Caco-2 (cell line): ENCODE measurements at regions of chr16 and their contacts with region 1.

Region 1: GRCh38 chr16:57244767-57245471 is at the start of gene ARL2BP:
- DNase-seq: peak; percentile 99 to 100
- H3K4me3 ChIP-seq: peak within 1 kb of the TSS; percentile 51
- H3K4me3 Mint-ChIP-seq: peak within 1 kb of the TSS; percentile 85
- H3K27ac Mint-ChIP-seq: peak within 1 kb of the TSS; percentile 87
- H3K4me1 ChIP-seq: no peaks in the 10 kb centered on the region
- H3K4me1 Mint-ChIP-seq: peaks cover 8% of the 10 kb centered on the region
- H3K27me3 ChIP-seq: no peaks in the 10 kb centered on the region
- H3K27me3 Mint-ChIP-seq: no peaks in the 10 kb centered on the region
- CTCF ChIP-seq: peak in 1 of 2 experiments; percentile 10
- total RNA-seq, gene ARL2BP: 38.5 and 47.6 TPM in 2 replicates

Region 2: DNA sequence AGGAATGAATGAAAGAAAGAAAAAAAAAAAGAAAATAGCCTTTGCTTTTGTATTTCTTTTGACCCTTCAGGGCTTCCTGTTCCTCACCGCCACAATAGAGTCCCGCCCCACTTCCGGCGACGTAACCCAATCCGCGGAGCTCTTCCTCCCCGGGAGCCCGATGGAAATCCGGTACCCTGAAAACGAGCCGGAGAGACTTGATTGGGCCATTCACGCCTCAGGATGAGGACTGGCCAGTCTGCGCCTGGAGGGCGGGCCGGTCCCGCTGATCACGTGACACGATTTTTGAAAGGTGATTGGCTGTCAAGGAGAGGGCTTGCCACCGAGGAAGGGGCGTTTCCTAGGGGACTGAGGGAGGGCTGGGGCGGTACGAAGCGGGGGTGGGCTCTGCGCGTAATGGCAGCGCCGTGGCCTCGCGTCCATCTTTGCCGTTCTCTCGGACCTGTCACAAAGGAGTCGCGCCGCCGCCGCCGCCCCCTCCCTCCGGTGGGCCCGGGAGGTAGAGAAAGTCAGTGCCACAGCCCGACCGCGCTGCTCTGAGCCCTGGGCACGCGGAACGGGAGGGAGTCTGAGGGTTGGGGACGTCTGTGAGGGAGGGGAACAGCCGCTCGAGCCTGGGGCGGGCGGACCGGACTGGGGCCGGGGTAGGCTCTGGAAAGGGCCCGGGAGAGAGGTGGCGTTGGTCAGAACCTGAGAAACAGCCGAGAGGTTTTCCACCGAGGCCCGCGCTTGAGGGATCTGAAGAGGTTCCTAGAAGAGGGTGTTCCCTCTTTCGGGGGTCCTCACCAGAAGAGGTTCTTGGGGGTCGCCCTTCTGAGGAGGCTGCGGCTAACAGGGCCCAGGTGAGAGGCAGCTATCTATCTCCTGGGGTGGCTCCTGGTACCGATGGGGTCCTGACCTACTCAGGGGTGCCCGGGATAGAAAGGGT is 58.7 kb before region 1 on chr16 and contains the starts of genes PSME3IP1 and RSPRY1:
- CTCF ChIA-PET with region 1: no interaction called
- POLR2A ChIA-PET with region 1: interaction called, 8 read pairs
- intact Hi-C with region 1: loop called (anchors 2 kb)
- DNase-seq: peak; percentile 100
- H3K4me3 ChIP-seq: peak within 1 kb of the TSS; percentile 92
- H3K4me3 Mint-ChIP-seq: peak within 1 kb of the TSS; percentile 99
- H3K27ac Mint-ChIP-seq: peak within 1 kb of the TSS; percentile 97
- H3K4me1 ChIP-seq: peaks cover 14% of the 10 kb centered on the region; the same call in 1 of the 2 replicates
- H3K4me1 Mint-ChIP-seq: peaks cover 31% of the 10 kb centered on the region
- H3K27me3 ChIP-seq: no peaks in the 10 kb centered on the region
- H3K27me3 Mint-ChIP-seq: no peaks in the 10 kb centered on the region
- CTCF ChIP-seq: no peak
- total RNA-seq, gene PSME3IP1: 141 and 143 TPM in 2 replicates
- total RNA-seq, gene RSPRY1: 56.7 and 57.7 TPM in 2 replicates

Region 3: GRCh38 chr16:57194512-57194911 is 50.4 kb before region 1 on chr16:
- CTCF ChIA-PET with region 1: no interaction called
- POLR2A ChIA-PET with region 1: interaction called, 3 read pairs
- intact Hi-C with region 1: loop called (anchors 2 kb)
- DNase-seq: peak in 1 of 2 experiments; percentile 68
- H3K4me3 ChIP-seq: no peak overlapping the region
- H3K4me3 Mint-ChIP-seq: peak overlapping the region; percentile 4
- H3K27ac Mint-ChIP-seq: peak overlapping the region; percentile 37
- H3K4me1 ChIP-seq: peaks cover 50% of the 10 kb centered on the region
- H3K4me1 Mint-ChIP-seq: peaks cover 49% of the 10 kb centered on the region
- H3K27me3 ChIP-seq: no peaks in the 10 kb centered on the region
- H3K27me3 Mint-ChIP-seq: no peaks in the 10 kb centered on the region
- CTCF ChIP-seq: no peak

Region 4: DNA sequence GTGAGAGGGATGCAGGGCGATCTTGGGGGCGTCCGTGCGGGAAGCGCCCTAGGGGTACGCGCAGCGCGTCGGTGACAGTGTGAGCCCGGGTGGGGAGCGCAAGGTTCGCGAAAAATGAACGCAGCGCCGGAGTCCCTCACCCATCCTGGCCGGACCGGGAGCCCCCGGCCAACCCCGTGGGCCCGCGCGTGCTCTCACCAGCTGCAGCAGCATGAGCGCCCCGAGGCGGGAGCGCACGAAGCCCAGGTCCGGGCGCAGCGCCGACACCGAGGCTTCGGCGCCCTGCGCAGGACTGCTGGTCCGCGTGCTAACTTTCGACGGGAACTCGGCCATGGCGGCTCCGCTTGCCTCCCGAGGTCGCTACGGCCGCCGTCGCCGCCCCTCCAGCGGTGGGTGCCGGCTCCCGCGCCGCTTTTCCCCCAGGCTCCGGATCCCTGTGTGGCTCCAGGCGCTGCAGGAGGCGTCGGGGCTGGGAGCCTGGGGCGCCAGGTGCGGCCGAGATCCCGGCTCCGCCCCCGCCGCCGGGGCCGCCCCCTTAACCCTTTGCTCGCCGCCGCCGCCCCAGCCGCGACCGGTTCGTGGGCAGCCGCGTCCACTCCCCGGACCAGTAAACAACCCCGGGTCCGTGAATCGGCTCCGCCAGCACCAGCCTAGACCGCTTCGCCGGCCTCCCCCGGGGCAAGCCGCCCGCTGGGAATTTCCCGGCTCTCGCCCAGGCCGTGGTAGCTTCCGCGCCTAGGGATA is 39.5 kb after region 1 on chr16 and contains the start of gene PLLP:
- CTCF ChIA-PET with region 1: interaction called, 5 read pairs
- POLR2A ChIA-PET with region 1: interaction called, 9 read pairs
- intact Hi-C with region 1: loop called (anchors 1 kb)
- DNase-seq: peak; percentile 77 to 89
- H3K4me3 ChIP-seq: peak within 1 kb of the TSS; percentile 99
- H3K4me3 Mint-ChIP-seq: peak within 1 kb of the TSS; percentile 80
- H3K27ac Mint-ChIP-seq: peak within 1 kb of the TSS; percentile 82
- H3K4me1 ChIP-seq: peaks cover 28% of the 10 kb centered on the region
- H3K4me1 Mint-ChIP-seq: peaks cover 31% of the 10 kb centered on the region
- H3K27me3 ChIP-seq: no peaks in the 10 kb centered on the region
- H3K27me3 Mint-ChIP-seq: no peaks in the 10 kb centered on the region
- CTCF ChIP-seq: no peak
- total RNA-seq, gene PLLP: 53.0 and 54.0 TPM in 2 replicates

Region 5: DNA sequence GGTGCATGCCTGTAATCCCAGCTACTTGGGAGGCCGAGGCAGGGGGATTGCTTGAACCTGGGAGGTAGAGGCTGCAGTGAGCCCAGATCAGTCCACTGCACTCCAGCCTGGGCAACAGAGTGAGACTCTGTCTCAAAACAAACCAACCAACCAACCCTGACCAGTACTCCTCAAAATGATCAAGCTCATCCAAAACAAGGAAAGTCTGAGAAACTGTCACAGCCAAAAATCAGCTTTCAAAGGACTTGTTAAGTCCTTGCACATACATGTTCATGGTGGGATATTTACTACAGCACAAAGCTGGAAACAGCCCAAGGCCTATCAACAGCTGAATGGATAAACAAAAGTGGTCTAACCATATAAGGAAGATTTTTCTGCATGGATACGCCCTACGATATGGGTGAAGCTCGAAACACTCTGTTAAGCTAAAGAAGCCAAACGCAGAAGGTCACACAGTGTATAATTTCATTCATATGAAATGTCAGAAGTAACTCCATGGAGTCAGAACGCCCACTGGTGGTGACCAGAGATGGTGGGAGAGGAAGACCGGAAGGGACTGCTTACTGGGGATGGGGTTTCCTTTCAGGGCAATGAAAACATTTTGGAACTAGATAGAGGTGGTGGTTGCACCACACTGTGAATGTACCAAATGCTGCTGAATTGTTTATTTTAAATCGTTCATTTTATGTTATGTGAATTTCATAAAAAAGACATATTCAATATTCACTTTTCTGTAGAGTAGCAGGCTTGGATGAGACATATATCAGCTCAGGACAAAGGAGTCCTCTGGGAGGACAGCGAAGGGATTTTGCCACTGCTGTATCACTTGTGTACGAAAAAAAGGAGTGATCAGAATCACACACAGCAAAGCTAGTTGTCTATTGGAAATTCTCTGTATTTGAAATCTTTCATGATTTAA is 177.4 kb after region 1 on chr16:
- CTCF ChIA-PET with region 1: interaction called, 5 read pairs
- POLR2A ChIA-PET with region 1: no interaction called
- intact Hi-C with region 1: loop called (anchors 1 kb)
- DNase-seq: peak in 1 of 2 experiments; percentile 75
- H3K4me3 ChIP-seq: no peak overlapping the region
- H3K4me3 Mint-ChIP-seq: peak overlapping the region; percentile 5
- H3K27ac Mint-ChIP-seq: no peak overlapping the region
- H3K4me1 ChIP-seq: peaks cover 14% of the 10 kb centered on the region
- H3K4me1 Mint-ChIP-seq: peaks cover 32% of the 10 kb centered on the region
- H3K27me3 ChIP-seq: no peaks in the 10 kb centered on the region
- H3K27me3 Mint-ChIP-seq: no peaks in the 10 kb centered on the region
- CTCF ChIP-seq: peak; percentile 59 to 97